Posterior vena cava (tissue), 2 donors: ENCODE measurements at regions of chr11 and their contacts with region 1.

Region 1: GRCh38 chr11:33959855-33960400 is 68.1 kb upstream of the LMO2 start:
- DNase-seq: no peak

Region 2: DNA sequence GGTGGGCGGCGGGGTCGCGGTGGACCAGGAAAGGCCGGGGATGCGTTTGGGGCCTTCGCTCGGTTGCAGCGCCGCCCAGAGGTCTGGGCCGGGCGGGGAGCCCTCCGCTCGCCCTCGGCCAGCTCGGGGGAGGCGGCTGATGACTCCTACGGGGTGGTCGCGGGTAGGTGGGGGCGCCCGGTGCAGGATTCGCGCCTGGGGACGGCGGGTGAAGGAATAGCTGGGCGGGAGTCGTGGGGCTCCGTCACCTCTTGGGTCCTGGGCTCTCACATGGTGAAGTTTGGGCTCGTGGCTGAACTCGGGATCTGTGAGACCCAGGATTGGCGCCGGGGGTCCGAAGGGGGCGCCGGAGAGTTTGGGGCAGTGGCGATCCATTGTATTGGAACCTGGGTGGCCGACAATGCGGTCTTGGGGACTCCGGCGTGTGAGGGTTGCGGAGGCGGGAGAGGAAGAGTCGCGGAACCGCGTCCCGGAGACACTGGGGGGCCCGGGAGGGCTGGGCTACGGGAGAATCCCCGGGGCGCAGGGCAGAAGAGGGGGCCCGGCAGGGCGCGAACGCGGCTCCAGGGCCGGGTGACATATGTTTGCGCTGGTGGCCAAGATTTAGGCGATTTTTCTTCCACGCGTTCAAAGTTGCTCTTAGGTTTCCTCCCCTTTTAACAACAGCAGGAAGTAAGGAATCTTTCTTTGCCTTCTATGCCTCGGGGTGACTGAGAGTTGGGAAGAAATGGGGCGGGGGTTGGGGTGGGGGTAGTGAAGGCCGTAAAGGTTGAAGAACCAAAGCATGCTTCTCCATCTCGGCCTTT is 1066.4 kb before region 1 on chr11:
- intact Hi-C with region 1: no loop called
- DNase-seq: peak; percentile 79

Region 3: DNA sequence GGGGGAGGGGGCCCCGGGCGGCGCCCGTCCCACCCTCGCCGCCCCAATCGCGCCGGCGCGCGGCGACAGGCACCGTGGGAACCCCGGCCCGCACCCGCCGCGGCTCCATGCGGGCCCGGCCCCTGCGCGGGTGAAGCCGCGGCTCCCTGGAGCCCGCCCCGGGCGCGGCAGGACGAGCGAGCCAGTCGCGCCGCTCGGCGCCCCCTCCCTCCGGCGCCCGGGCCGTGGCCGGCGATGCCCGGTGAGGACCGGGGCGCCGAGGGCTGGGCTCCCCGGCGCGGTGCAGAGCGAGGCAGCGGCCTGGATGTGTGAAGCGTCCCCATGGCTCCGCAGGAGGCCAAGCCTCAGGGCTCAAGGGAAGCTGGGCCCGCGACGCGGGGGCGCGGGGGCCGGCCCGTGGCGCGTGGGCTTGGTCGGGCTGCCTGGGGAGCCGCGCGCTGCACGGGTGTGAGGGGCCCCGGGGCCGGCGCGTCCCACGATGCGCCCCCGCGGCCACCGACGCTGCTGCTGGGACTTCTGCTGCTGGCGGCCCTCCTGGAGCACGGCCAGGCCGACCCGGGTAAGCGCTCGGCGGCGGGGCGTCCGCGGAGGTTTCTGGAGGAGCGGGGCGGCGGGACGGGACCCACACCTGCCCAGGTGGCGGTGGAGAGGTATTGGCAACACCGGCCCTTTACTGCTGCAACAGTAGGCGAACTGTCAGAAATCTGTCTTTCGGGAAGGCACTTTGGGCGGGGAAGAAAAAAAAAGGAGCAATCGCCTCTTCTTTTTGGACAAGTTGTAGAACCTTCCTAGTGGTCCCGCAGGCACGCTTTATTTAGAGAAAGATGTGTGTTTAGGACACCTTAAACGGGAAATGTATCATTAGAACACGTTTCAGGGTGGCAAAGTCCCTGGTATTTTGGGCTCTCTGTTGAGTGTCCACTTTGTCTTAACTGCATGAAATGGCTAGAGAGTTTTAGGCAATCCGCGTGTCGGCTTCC is 583.3 kb before region 1 on chr11:
- intact Hi-C with region 1: no loop called
- DNase-seq: no peak

Region 4: DNA sequence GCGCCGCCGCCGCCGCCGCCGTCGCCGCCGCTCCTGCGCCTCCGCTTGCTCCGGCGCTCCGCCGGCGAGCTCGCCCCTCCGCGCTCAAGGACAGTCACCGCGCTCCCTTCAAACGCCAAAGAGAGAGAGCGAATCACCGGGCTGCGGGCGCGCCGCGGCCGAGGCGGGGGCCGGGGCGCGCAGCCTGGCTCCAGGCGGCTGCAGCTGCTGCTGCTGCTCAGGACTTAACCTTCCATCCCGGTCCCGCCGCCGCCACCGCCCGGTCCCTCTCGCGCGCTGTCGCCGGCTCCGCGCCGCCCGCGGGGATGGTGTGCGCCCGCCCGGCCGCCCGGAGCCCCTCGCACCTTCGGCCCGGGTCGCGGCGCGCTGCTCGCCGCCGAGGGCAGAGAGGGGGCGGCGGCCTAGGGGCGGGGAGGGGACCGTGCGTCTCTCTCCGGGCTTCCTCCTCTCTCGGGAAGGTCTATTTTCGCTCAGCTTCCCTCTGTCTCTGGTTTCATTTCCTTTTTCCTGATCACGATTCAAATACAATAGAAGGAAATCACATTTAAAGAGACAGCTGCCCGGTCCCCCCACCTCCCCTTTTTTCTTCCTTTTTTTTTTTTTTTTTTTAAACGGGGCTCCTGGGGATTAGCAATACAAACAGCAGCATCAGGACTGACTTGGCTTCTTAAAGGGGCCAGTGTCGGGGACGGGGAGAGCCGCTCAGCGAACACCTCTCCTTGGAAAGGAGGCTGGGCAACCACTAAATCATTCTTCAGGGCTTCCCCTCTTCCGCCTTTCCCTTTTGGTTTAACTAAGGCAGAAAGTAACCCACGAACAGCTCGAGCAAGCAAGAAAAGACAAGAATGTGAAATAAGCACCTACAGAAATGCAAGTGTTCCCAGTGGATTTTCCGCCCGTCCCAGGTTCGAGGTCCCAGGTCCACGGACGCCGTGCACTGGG is 90.2 kb before region 1 on chr11:
- intact Hi-C with region 1: loop called in 1 of 2 experiments (anchors 5 kb)
- DNase-seq: peak; percentile 87

Region 5: DNA sequence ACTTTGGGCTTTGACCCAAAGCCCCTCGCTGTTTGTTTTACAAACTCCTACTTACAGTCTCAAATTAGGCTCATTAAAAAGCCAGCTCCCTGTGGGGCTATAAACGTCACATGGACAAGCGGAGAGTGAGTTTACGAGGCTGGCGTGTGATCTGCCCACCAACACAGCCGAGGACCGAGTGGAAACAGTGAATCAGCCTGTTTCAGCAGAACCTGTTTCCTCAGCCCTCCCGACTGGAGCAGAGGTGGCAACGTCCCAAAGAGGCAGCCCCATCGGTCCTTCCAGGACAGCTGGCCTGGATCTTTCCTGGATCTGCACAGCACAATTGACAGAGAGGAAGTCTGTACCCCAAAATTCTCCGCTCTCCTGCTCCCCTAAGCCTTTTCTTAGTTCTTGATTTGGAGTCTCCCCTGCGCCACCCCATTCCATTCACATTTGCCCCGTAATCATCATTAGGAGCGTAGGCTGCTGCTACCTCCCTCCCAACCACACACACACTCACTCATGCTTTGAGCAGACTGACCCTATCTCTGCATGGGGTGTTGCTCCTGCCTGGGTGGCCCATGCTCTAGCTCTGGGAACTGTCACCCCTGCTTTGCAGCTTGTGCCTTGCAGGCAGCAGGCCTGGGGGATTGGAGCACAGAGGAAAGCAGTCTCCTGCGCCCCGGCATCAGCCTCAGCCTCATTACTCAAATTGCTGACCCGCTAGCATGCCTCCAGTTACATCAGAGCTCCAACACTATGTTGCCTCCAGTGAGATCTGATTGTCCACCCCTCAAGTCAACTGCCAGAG is 263.3 kb after region 1 on chr11:
- intact Hi-C with region 1: no loop called
- DNase-seq: peak; percentile 94